ENCODE measurements at regions of chr6 and their contacts with region 1.

Region 1: GRCh38 chr6:142893075-142893474 is 51.9 kb downstream of the HIVEP2 start:
- DNase-seq: no peak
- ATAC-seq: peak in 1 of 4 donors; percentile 32
- H3K4me3 ChIP-seq: no peak overlapping the region
- H3K27ac ChIP-seq: no peak overlapping the region
- H3K4me1 ChIP-seq: no peaks in the 10 kb centered on the region
- H3K27me3 ChIP-seq: no peaks in the 10 kb centered on the region
- CTCF ChIP-seq: no peak
- POLR2A ChIP-seq: no peak

Region 2: GRCh38 chr6:142702501-142703460 is 190.3 kb before region 1 on chr6:
- intact Hi-C with region 1: loop called in 1 of 2 experiments (anchors 10 kb)
- DNase-seq: peak; percentile 58 to 64 (median 64)
- ATAC-seq: peak; percentile 85 to 90 (median 87)
- H3K4me3 ChIP-seq: no peak overlapping the region
- H3K27ac ChIP-seq: peak overlapping the region; percentile 8 to 62 (median 32)
- H3K4me1 ChIP-seq: no peaks in the 10 kb centered on the region
- H3K27me3 ChIP-seq: no peaks in the 10 kb centered on the region
- CTCF ChIP-seq: no peak
- POLR2A ChIP-seq: no peak

Region 3: DNA sequence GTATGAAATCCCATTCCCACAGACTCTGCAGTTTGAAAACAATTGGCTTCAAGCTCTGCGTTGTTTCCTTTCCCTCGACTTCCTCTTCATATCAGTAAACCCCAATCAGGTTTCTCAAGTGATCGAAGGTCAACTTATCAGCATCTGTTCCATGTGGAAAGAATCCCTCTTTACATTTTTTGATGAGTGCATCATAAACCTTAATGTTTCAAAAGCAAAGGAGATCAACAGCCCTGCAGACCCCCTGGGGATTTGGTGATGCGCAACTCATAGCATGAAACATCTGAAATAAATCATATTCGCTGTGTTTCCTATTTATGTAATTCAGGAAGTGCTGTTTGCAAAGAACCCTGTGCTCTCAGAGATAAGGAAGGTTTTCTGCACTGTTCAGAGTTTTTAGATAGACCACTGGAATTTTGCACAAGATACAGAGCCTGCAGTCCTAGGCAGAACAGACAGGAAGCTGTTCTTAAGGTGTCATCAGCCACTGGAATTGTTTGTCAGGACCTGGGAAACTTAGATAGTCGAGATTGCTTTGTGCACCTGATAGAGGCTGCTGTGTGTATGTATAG is 164.1 kb before region 1 on chr6:
- intact Hi-C with region 1: no loop called
- DNase-seq: no peak
- ATAC-seq: peak; percentile 64 to 84 (median 80)
- H3K4me3 ChIP-seq: no peak overlapping the region
- H3K27ac ChIP-seq: no peak overlapping the region
- H3K4me1 ChIP-seq: no peaks in the 10 kb centered on the region
- H3K27me3 ChIP-seq: no peaks in the 10 kb centered on the region
- CTCF ChIP-seq: no peak
- POLR2A ChIP-seq: no peak

Measured in right lobe of liver (tissue), 6 donors.